Dendritic cell treated with granulocyte-macrophage colony-stimulating factor and Interleukin-4, amounts not matched to agents 40 ng/mL and 50 ng/mL, for 4 days (primary cell): ENCODE measurements at regions of chr2 and their contacts with region 1.

Region 1: DNA sequence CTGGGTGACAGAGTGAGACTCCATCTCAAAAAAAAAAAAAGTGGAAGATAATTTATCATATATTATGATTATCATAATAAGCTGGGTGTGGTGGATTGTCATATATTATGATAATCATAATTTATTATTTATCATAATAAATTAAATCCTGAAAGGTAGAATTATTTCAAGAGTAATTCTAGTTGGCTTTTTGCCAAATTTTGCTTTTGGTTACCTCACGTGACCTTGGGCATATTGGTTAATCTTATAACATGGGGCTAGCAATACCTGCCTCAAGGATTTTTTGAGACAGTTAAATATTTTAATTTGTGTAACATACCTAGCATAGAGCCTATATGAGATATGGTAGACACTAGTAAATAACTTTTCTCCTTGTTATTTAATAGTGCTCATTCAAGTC is 111.3 kb upstream of the TTC27 start:
- H3K4me3 Mint-ChIP-seq: no peak overlapping the region
- H3K27ac Mint-ChIP-seq: no peak overlapping the region
- H3K4me1 Mint-ChIP-seq: no peaks in the 10 kb centered on the region
- H3K27me3 Mint-ChIP-seq: no peaks in the 10 kb centered on the region

Region 2: DNA sequence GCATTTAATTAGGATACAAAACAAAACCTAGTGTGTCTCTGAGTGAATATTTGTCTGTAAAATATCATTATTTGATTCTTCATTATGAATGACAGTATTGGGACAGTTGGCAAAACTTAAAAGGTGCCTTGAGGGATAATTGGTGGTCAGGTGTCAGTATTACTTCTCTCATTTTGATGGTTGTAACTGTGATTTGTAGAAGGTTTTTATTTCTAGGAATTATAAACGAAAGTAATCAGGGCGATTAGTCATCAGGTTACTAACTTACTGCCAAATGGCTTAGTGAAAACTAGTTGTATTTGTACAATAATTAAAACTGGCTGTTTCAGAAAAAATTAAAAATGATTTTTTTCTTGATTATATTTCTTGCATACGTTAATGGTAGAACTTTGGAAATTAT is 42.2 kb before region 1 on chr2:
- intact Hi-C with region 1: loop called (anchors 5 kb)
- H3K4me3 Mint-ChIP-seq: no peak overlapping the region
- H3K27ac Mint-ChIP-seq: no peak overlapping the region
- H3K4me1 Mint-ChIP-seq: no peaks in the 10 kb centered on the region
- H3K27me3 Mint-ChIP-seq: no peaks in the 10 kb centered on the region

Region 3: GRCh38 chr2:32553829-32554432 is 37.4 kb after region 1 on chr2:
- intact Hi-C with region 1: no loop called
- H3K4me3 Mint-ChIP-seq: no peak overlapping the region
- H3K27ac Mint-ChIP-seq: no peak overlapping the region
- H3K4me1 Mint-ChIP-seq: no peaks in the 10 kb centered on the region
- H3K27me3 Mint-ChIP-seq: no peaks in the 10 kb centered on the region

Region 4: DNA sequence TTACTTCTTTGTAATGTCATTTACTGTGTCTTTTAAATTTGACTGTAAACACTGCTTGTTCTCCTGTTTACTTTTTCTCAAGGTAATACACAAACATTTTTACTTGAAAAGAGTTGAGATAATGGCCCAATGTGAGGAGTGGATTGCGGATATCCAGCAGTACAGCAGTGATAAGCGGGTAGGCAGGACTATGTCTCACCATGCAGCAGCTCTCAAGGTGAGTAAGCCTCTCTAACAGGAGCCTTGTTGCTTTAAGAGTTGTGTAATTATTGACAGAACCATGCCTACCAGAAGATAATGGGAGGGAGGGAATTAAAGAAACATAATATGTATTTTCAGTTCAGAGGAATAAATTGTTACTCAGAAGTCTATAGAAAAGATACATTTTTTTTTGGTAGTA is 94.8 kb after region 1 on chr2:
- intact Hi-C with region 1: loop called (anchors 10 kb)
- H3K4me3 Mint-ChIP-seq: no peak overlapping the region
- H3K27ac Mint-ChIP-seq: no peak overlapping the region
- H3K4me1 Mint-ChIP-seq: peaks cover 22% of the 10 kb centered on the region
- H3K27me3 Mint-ChIP-seq: no peaks in the 10 kb centered on the region